Activated B cell treated with CpG ODN at 0.5 μM for 24 hours (primary cell): ENCODE measurements at regions of chr3 and their contacts with region 1.

Region 1: GRCh38 chr3:58237238-58237940 is at the start of gene ABHD6:
- DNase-seq: peak; percentile 86
- ATAC-seq: peak; percentile 67
- H3K4me3 Mint-ChIP-seq: peak within 1 kb of the TSS; percentile 91
- H3K27ac Mint-ChIP-seq: peak within 1 kb of the TSS; percentile 90
- H3K4me1 Mint-ChIP-seq: peaks cover 74% of the 10 kb centered on the region
- H3K27me3 Mint-ChIP-seq: no peaks in the 10 kb centered on the region
- CTCF ChIP-seq: no peak
- total RNA-seq, gene ABHD6: 37.1 and 48.7 TPM in 2 replicates

Region 2: DNA sequence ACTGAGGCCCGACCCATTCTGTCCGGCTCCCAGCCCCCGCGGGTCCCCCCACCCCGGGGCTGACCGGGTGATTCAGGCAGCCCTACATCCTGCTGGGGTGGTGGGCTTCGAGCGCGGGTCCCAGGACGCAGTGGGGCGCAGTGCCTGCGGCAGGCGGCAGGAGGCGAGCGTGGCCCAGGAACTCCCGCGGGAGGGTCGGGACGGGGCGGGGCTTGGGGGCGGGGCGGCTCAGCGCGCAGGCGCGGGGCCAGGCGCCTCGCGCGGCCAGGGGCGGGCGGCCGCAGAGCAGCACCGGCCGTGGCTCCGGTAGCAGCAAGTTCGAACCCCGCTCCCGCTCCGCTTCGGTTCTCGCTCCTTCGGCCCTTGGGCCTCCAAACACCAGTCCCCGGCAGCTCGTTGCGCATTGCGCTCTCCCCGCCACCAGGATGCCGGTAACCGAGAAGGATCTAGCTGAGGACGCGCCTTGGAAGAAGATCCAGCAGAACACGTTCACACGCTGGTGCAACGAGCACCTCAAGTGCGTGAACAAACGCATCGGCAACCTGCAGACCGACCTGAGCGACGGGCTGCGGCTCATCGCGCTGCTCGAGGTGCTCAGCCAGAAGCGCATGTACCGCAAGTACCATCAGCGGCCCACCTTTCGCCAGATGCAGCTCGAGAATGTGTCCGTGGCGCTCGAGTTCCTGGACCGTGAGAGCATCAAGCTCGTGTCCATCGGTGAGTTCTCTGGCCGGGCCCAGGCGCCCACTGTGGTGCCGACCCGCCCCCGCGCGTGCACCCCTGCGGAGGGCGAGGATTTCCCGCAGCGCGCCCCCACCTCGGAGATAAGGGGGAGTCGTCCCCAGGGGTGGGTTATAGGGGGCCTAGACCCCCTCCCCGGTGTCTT is 229.0 kb before region 1 on chr3 and contains the start of gene FLNB:
- CTCF ChIA-PET with region 1: no interaction called
- POLR2A ChIA-PET with region 1: no interaction called
- intact Hi-C with region 1: loop called (anchors 5 kb)
- DNase-seq: peak; percentile 72
- ATAC-seq: peak; percentile 93
- H3K4me3 Mint-ChIP-seq: peak within 1 kb of the TSS; percentile 95
- H3K27ac Mint-ChIP-seq: peak within 1 kb of the TSS; percentile 73
- H3K4me1 Mint-ChIP-seq: peaks cover 16% of the 10 kb centered on the region
- H3K27me3 Mint-ChIP-seq: no peaks in the 10 kb centered on the region
- CTCF ChIP-seq: no peak
- total RNA-seq, gene FLNB: 13.4 and 16.7 TPM in 2 replicates

Region 3: DNA sequence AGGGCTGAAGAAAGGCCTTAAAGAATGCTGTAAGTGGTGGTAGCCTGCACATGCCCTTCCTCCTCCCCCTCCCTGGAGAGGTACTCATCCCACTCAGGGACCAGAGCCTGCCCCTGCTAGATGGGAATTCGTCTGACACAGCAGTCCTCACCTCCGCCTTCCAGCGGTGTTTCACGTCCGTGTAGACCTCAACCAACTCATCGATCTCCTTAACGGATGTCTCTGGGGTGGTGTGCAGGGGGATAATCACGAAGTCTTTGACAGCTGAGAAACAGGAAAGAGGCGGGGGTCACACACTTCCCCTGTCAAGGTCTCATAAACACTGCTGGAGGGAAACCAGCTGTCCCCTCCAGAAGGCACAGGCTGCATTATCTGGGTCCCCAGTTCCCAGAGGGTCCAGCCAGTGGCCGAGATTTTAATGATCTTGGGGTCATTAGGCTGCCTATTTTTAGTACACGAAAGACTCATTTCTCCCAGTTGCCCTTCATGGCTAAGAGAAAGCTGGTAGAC is 36.5 kb before region 1 on chr3:
- CTCF ChIA-PET with region 1: interaction called, 7 read pairs
- POLR2A ChIA-PET with region 1: interaction called, 58 read pairs
- intact Hi-C with region 1: loop called (anchors 1 kb)
- DNase-seq: no peak
- ATAC-seq: no peak
- H3K4me3 Mint-ChIP-seq: peak overlapping the region; percentile 64
- H3K27ac Mint-ChIP-seq: peak overlapping the region; percentile 70
- H3K4me1 Mint-ChIP-seq: peaks cover 66% of the 10 kb centered on the region
- H3K27me3 Mint-ChIP-seq: no peaks in the 10 kb centered on the region
- CTCF ChIP-seq: no peak

Region 4: DNA sequence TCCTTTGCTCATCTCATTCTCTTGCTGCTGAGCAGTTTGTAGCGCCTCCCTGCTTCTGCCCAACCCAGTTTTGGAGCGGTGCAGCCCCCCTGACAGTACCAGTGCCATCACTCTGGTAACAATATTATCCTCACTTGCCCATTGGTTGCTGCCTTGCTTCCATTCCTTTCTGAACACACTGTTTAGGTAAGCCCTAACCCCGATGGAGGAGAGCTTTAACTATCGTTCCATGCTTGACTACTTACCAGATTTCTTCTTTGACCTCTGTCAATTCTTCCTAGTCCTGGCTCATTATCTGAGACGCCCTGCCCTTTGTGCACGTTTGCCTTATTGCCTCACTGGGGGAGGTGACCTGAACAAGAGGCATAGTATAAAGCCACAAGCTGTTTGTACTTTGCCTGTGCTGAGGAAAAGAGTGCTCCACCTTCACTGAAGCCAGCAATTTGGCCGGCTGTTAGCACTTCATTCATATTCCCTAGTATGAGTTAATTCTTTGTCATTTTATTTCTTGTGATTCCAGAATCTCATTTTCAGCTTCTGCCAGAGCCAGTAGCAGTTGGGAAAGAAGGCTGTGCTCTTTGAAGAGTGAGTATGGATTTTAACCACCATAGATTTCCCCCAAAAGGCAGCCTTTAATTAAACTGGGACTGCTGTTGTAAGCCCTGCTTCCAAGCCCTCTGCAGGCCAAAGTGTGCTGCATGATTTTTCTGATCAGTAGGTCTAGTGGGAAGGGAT is 12.1 kb after region 1 on chr3:
- CTCF ChIA-PET with region 1: no interaction called
- POLR2A ChIA-PET with region 1: interaction called, 3 read pairs
- intact Hi-C with region 1: loop called (anchors 1 kb)
- DNase-seq: no peak
- ATAC-seq: peak; percentile 94
- H3K4me3 Mint-ChIP-seq: peak overlapping the region; percentile 49
- H3K27ac Mint-ChIP-seq: peak overlapping the region; percentile 50
- H3K4me1 Mint-ChIP-seq: peaks cover 34% of the 10 kb centered on the region
- H3K27me3 Mint-ChIP-seq: no peaks in the 10 kb centered on the region
- CTCF ChIP-seq: no peak

Region 5: DNA sequence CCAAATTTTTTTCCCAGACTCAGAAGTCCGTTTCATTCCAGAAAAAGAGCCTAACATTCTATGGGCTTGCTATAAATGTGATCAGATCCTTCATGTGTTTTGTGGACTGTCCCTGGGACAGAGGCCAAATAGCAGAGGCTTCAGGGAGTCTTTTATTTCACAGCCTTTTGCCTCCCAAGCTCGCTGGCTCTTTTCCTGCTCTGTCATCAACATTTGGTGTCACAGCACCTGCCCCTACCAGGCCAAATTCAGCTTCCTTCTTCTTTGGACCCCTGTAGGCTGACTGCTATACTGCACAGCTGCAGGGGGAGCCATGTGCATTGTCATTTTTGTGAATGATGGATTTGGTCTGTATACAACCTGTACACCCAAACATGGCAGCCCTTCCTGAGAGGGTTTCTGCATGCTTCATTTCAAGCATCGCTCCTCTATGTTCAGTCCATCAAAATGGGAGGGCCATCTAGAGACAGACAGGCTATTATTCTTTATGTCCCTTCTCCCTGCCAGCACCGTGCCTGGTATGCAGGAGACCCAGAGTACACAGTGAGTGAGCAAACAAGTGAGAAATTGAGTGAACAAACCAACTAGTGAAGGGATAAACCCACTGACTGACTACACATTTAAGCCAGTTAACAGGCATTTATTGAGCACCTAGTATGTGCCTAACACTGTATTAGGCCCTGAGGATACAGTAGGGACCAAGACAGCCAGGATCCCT is 50.8 kb after region 1 on chr3:
- CTCF ChIA-PET with region 1: no interaction called
- POLR2A ChIA-PET with region 1: no interaction called
- intact Hi-C with region 1: no loop called
- DNase-seq: no peak
- ATAC-seq: no peak
- H3K4me3 Mint-ChIP-seq: no peak overlapping the region
- H3K27ac Mint-ChIP-seq: no peak overlapping the region
- H3K4me1 Mint-ChIP-seq: no peaks in the 10 kb centered on the region
- H3K27me3 Mint-ChIP-seq: no peaks in the 10 kb centered on the region
- CTCF ChIP-seq: no peak

Region 6: GRCh38 chr3:58299839-58300516 is 62.6 kb after region 1 on chr3:
- CTCF ChIA-PET with region 1: interaction called, 4 read pairs
- POLR2A ChIA-PET with region 1: no interaction called
- intact Hi-C with region 1: loop called (anchors 1 kb)
- DNase-seq: no peak
- ATAC-seq: peak; percentile 58
- H3K4me3 Mint-ChIP-seq: no peak overlapping the region
- H3K27ac Mint-ChIP-seq: no peak overlapping the region
- H3K4me1 Mint-ChIP-seq: peaks cover 1% of the 10 kb centered on the region
- H3K27me3 Mint-ChIP-seq: peaks cover 3% of the 10 kb centered on the region
- CTCF ChIP-seq: no peak

Region 7: GRCh38 chr3:58433400-58434169 is 196.2 kb after region 1 on chr3 and contains the start of gene PDHB:
- CTCF ChIA-PET with region 1: no interaction called
- POLR2A ChIA-PET with region 1: interaction called, 5 read pairs
- intact Hi-C with region 1: loop called (anchors 5 kb)
- DNase-seq: peak; percentile 86
- ATAC-seq: peak; percentile 95
- H3K4me3 Mint-ChIP-seq: peak within 1 kb of the TSS; percentile 95
- H3K27ac Mint-ChIP-seq: peak within 1 kb of the TSS; percentile 95
- H3K4me1 Mint-ChIP-seq: peaks cover 27% of the 10 kb centered on the region
- H3K27me3 Mint-ChIP-seq: no peaks in the 10 kb centered on the region
- CTCF ChIP-seq: no peak
- total RNA-seq, gene PDHB: 63.0 and 67.3 TPM in 2 replicates

Region 8: DNA sequence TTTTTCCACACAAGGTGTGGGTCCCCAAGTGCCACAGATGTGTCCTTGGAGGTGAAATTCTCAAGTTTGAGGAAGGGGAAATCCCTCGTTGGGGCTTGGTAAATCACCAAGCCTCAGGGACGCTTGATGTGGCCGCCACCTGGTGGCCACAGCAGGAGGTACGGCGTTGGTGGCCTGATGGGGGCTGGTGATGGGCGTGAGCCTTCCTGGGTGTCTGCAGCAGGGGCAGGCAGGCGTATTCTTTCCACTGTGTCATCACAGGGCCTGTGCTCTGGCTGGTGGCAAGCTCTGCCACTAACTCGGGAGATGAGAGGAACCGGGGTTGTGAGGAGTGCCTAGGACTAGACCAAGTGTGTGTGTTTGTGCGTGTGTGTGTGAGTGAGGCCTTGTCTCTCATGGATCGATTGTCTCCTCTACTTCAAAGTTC is 295.4 kb after region 1 on chr3:
- CTCF ChIA-PET with region 1: no interaction called
- POLR2A ChIA-PET with region 1: no interaction called
- intact Hi-C with region 1: loop called (anchors 2 kb)
- DNase-seq: peak; percentile 75
- ATAC-seq: peak; percentile 100
- H3K4me3 Mint-ChIP-seq: no peak overlapping the region
- H3K27ac Mint-ChIP-seq: no peak overlapping the region
- H3K4me1 Mint-ChIP-seq: peaks cover 7% of the 10 kb centered on the region
- H3K27me3 Mint-ChIP-seq: no peaks in the 10 kb centered on the region
- CTCF ChIP-seq: no peak